Posterior cingulate gyrus (tissue), 11 donors: ENCODE measurements at regions of chr11 and their contacts with region 1.

Region 1: GRCh38 chr11:65013692-65014145 is 241 bp upstream of the ARL2 start:
- DNase-seq: peak; percentile 91 to 99 (median 94)

Region 2: GRCh38 chr11:64846998-64847666 is 166.6 kb before region 1 on chr11:
- intact Hi-C with region 1: loop called (anchors 5 kb)
- DNase-seq: peak; percentile 79 to 99 (median 93)

Region 3: GRCh38 chr11:64924102-64924851 is 89.4 kb before region 1 on chr11 and contains the start of gene PPP2R5B:
- intact Hi-C with region 1: loop called (anchors 5 kb)
- DNase-seq: peak; percentile 91 to 99 (median 96)

Region 4: DNA sequence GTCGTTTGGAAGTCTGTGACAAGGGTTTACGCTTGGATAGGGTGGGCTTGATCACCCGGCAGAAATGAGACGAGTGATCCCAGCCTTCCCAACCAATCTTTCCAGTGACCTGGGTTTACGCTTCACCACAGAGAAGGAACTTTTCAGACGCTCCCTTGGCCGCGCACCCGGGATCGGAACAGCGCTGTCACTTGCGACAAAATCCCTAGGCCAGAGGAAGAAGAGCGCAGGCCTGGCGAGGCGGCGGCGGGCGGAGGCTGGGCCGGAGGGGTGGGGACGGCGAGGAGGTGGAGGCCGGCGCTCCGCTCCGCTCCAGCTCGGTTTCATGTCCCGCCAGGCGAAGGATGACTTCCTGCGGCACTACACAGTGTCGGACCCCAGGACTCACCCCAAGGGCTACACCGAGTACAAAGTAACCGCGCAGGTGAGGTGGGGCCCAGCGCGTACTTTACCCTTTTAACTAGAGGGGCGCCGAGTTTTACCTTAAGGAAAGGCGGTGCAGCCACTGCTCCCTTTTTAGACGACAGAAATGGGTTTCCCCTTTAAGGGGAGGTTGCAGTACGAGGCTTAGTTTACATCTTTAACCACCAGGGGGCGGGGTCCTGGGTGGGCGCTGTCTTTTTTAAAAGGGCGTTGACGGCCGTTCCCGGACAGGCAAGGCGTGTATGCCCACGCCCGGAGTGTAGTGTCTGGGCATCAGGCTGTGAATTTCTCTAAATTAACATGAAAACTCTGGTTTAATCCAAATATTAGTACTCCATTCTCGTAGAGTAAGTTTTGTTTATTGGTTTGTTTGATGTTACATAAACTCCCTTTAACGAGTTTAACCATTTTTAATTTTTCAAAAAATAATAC is 13.7 kb after region 1 on chr11 and contains the start of gene SNX15:
- intact Hi-C with region 1: loop called (anchors 1 kb)
- DNase-seq: peak; percentile 92 to 99 (median 94)

Region 5: DNA sequence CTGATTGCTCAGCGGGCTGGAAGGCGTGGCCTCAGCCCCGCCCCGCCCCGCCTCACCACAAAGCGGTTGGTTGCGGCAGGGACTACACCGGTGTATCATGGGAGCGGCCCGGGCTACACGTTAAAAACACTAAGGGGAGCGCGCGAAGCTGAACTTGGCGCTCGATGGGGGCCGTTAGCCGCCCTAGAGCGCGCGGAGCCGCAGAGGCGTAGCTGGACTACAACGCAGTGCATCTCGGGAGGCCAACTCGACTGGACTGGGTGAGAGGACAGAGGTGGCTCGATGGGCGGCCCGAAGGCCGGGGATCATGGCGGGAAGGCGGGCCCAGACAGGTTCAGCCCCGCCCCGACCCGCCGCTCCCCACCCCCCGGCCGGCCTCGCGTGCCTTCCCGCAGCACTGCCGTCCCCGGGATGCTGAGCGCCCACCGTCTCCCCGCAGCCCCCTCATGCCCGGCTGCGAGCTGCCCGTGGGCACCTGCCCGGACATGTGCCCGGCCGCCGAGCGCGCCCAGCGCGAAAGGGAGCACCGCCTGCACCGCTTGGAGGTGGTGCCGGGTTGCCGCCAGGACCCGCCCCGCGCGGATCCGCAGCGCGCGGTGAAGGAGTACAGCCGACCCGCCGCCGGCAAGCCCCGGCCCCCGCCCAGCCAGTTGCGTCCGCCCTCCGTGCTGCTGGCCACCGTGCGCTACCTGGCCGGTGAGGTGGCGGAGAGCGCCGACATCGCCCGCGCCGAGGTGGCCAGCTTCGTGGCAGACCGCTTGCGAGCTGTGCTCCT is 27.3 kb after region 1 on chr11 and contains the start of gene SAC3D1:
- intact Hi-C with region 1: loop called (anchors 2 kb)
- DNase-seq: peak; percentile 81 to 98 (median 90)

Region 6: GRCh38 chr11:65083834-65084597 is 70.3 kb after region 1 on chr11 and contains the starts of genes CDCA5 and ZFPL1:
- intact Hi-C with region 1: loop called (anchors 1 kb)
- DNase-seq: peak; percentile 95 to 100 (median 98)

Region 7: DNA sequence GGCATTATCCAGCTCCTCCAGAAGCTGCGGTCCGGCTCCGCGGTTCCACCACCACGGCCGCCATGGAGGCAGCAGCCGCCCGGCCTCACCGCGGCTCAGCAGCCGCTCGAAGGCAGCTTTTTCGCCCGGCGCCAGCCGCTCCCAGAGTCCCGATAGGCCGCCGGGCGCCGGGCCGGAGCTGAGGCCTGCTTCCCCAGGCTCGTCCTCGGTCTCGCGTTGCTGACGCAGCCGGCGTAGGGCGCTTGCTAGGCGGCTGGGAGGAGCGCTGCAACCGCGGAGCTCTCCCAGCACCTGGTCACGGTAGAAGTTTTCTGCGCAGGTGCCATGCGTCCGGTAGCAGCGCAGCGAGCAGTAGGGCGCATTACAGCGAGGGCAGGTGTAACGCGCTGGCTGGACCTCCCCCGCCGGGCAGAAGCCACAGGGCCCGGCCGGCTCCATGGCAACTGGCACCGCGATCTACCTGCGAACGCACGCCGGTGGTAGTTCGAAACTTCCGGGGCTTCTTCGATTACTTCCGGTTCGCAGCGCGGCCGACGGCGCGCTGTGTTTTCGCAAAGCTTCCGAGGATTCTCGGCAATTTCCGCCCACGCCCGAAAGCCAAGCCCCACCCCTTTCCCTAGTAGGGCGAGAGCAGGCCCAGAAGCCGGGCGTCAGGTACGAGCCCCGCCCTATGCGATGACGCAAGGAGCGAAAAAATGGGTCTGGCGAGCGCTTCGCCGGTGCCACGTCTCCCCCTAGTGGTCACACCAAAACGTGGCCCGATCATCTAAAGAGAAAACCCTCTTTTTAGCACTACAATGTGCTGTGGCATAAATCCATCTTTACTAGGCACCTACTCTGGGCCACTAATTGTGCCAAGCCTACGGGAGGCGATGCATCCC is 103.7 kb after region 1 on chr11 and contains the start of gene ZNHIT2:
- intact Hi-C with region 1: loop called (anchors 2 kb)
- DNase-seq: peak; percentile 99 to 100 (median 100)